ENCODE measurements at regions of chr22 and their contacts with region 1.

Region 1: DNA sequence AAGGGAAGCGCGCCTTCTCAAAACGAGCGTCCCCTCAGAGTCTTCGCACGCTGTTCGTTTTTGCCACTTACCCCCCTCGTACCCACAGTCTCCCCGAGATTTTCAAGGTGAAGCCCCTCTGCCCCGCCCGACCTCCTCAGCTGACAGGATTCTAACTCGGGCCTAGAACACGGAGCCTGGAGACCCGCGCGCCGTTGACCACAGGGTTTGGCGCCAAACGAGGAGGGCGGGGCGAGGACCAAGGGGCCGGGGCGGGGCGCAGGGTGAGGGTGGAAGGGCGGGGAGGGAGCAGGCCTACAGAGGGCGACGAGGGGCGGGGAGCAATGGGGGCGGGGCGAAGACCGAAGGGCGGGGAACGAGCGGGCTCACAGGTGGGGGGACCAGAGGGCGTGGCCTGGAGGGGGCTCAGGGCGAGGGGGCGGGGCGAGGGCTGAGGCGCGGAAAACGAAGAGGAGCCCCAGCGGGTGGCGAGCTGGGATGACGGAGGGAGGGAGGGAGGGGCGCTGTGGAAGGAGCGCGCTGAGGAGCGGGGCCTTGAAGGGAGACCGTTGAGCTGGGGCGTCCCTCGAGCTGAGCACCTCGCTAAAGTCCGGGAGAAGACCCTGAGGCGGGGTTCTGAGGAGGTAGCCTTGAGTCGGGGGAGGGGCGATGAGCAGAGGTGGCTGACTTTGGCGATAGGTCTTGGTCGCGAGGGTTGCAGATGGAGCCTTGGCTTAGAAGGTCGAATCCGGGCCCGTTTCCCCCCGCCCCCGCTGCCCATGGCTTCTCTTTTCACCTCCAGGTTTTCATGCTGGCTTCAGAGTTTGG is at the start of gene DMC1:
- DNase-seq: peak; percentile 88
- H3K4me3 Mint-ChIP-seq: peak within 1 kb of the TSS; percentile 85
- H3K27ac Mint-ChIP-seq: peak within 1 kb of the TSS; percentile 83
- H3K4me1 Mint-ChIP-seq: peaks cover 12% of the 10 kb centered on the region
- H3K27me3 Mint-ChIP-seq: no peaks in the 10 kb centered on the region
- CTCF ChIP-seq: no peak
- total RNA-seq, gene DMC1: 0.56 and 1.4 TPM in 2 replicates

Region 2: DNA sequence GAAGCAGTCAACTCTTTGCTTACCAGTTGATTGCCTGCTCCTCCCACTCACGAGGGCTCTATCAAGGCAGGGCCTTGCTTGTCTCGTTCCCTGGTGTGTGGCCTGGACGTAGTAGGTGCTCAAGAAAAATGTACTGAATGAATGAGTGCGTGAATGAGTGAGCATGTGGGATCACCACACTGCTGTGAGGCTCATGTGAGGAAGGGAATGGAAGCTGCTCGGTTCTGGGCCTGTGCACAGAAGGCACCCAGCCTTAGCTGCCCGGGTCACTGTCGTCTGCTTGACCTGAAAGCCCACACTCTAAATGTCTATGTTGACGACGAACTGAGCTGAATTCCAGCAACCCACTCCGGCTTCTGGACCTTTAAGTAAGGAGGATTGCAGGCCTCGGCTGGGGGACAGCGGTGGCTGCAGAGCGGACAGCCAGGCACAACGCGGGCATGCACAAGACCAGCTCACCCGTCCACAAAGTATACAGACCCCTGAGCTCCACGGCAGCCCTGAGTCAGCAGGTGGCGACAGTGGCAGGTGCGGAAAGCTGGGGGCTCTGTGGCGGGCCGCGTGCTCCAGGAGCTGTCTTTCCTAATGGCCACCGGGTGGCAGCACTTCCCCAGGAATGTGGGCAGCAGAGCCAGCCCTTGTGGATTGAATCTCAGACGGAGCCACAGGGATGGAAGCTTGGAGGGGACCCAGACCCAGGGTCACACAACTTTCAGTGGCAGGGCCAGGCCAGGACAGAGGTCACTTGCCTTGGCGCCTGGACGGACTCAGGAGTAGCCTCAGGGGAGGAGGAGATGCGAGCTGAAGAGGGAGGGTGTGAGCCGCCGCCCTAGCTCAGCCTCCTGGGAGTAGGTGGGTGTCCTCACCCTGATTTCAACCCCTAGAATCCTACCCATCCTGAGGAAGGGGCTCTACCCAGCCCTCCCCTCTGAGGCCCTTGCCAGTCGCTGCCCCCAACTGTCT is 518.0 kb before region 1 on chr22:
- CTCF ChIA-PET with region 1: interaction called, 38 read pairs
- POLR2A ChIA-PET with region 1: no interaction called
- intact Hi-C with region 1: loop called (anchors 1 kb)
- DNase-seq: peak; percentile 83
- H3K4me3 Mint-ChIP-seq: no peak overlapping the region
- H3K27ac Mint-ChIP-seq: no peak overlapping the region
- H3K4me1 Mint-ChIP-seq: peaks cover 5% of the 10 kb centered on the region
- H3K27me3 Mint-ChIP-seq: no peaks in the 10 kb centered on the region
- CTCF ChIP-seq: peak; percentile 93

Region 3: GRCh38 chr22:38353142-38353629 is 217.0 kb before region 1 on chr22:
- CTCF ChIA-PET with region 1: interaction called, 4 read pairs
- POLR2A ChIA-PET with region 1: interaction called, 3 read pairs
- intact Hi-C with region 1: loop called (anchors 5 kb)
- DNase-seq: peak; percentile 65
- H3K4me3 Mint-ChIP-seq: no peak overlapping the region
- H3K27ac Mint-ChIP-seq: peak overlapping the region; percentile 64
- H3K4me1 Mint-ChIP-seq: peaks cover 9% of the 10 kb centered on the region
- H3K27me3 Mint-ChIP-seq: no peaks in the 10 kb centered on the region
- CTCF ChIP-seq: peak; percentile 97

Region 4: GRCh38 chr22:38412435-38413084 is 157.6 kb before region 1 on chr22:
- CTCF ChIA-PET with region 1: no interaction called
- POLR2A ChIA-PET with region 1: no interaction called
- intact Hi-C with region 1: loop called (anchors 10 kb)
- DNase-seq: no peak
- H3K4me3 Mint-ChIP-seq: no peak overlapping the region
- H3K27ac Mint-ChIP-seq: no peak overlapping the region
- H3K4me1 Mint-ChIP-seq: no peaks in the 10 kb centered on the region
- H3K27me3 Mint-ChIP-seq: no peaks in the 10 kb centered on the region
- CTCF ChIP-seq: peak; percentile 74

Region 5: DNA sequence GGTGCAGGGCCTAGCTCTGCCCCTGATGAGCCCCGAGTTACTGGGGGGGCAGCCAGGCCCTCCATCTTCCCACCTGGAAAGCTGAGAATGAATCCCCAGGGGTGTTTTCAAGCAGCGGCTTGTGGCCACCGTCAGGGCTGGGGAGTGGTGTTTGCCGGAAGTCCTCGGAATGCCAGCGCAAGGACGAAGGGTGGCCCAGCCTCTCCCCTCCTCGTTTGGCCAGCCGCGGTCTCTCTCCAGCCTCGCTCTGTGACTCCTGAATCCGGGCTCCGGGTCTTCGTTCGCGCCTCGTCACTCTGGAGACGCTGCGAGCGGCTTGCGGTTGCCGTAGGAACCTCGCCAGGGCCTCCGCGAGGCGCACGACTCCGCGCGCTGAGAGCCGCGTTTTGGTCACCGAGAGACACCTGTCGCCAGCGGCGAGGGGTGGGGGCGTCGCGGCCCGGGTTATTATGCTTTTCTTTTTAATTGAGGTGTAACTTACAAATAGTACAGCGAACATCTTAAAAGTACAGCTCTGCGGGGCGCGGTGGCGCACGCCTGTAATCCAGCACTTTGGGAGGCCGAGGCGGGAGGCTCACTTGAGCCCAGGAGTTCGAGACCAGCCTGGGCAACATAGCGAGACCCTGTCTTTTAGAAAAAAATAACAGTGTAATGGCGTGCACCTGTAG is 108.6 kb before region 1 on chr22:
- CTCF ChIA-PET with region 1: no interaction called
- POLR2A ChIA-PET with region 1: no interaction called
- intact Hi-C with region 1: no loop called
- DNase-seq: peak; percentile 78
- H3K4me3 Mint-ChIP-seq: peak overlapping the region; percentile 43
- H3K27ac Mint-ChIP-seq: no peak overlapping the region
- H3K4me1 Mint-ChIP-seq: no peaks in the 10 kb centered on the region
- H3K27me3 Mint-ChIP-seq: peaks cover 24% of the 10 kb centered on the region
- CTCF ChIP-seq: no peak

Region 6: DNA sequence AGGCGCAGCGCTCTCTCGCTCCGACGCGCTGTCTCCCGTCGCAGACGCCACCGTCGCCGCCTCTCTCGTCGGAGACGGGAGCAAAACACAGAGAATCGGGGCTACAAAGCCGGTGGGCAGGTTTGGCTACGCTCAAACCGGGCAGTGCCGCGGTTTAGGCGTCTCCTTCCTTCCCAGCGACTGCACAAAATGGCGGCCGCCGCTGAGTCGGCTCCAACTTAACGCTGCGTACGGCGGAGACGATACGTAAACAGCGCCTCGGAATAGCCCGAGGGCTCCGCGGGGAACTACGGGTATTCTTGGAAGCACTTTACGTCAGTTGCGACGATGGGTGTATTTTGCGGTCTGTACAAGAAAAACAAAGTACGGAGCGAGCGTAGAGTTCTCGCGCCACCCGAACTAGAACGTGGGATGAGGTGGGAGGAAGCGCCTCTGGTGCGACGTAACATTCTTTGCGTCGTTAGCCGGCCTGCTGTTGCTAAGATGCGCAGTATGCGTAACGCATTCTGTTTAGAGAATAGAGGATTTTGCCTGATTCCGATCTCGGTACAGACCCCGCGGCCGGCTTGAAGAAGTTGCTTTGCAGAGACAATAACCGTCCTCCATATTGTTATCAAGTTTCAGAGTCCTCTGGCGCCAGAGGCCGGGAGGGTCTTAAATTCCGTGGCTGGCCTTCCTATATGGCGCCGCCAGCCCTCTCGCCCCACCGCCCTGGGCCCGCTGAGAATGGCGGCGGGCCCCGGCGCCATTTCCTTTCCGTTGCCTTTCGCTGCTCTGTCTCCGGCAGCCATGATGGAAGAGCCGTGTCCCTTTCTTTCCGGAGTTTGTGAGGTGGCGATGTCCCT is 63.8 kb before region 1 on chr22 and contains the start of gene DDX17:
- CTCF ChIA-PET with region 1: interaction called, 3 read pairs
- POLR2A ChIA-PET with region 1: interaction called, 3 read pairs
- intact Hi-C with region 1: loop called (anchors 5 kb)
- DNase-seq: peak; percentile 93
- H3K4me3 Mint-ChIP-seq: peak within 1 kb of the TSS; percentile 81
- H3K27ac Mint-ChIP-seq: peak within 1 kb of the TSS; percentile 99
- H3K4me1 Mint-ChIP-seq: peaks cover 24% of the 10 kb centered on the region
- H3K27me3 Mint-ChIP-seq: no peaks in the 10 kb centered on the region
- CTCF ChIP-seq: no peak
- total RNA-seq, gene DDX17: 322 and 422 TPM in 2 replicates

Region 7: DNA sequence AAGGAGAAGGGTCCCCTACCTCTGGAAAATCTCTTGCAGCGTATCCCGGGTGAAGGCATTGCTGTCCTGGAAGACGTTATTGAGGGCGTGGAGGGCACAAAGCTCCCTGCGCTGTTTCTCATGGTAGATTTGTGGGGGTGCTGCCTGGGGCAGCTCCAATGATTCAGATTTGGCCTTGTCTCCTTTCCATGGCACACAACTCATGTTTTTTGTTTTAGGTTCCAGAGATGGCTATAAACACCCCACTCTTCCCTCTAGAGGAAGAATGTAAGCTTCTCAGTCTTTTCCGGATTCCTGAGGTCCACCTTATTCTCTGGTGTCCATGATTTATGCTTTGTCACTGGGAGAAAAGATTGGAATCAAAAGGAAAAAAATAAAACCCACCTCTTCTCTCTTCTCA is 129.6 kb after region 1 on chr22:
- CTCF ChIA-PET with region 1: no interaction called
- POLR2A ChIA-PET with region 1: no interaction called
- intact Hi-C with region 1: no loop called
- DNase-seq: no peak
- H3K4me3 Mint-ChIP-seq: peak overlapping the region; percentile 79
- H3K27ac Mint-ChIP-seq: peak overlapping the region; percentile 85
- H3K4me1 Mint-ChIP-seq: peaks cover 25% of the 10 kb centered on the region
- H3K27me3 Mint-ChIP-seq: no peaks in the 10 kb centered on the region
- CTCF ChIP-seq: no peak

Measured in MCF 10A (cell line).